Activated T-helper 2 cell treated with anti-CD3 and anti-CD28 coated beads, Interferon-gamma antibody, Interleukin-2, Interleukin-4, amounts not matched to agents 10 μg/mL and 5 μg/mL and 100 μg/mL, durations not matched to agents 14 hours and 24 hours and 36 hours (primary cell): ENCODE measurements at regions of chr7 and their contacts with region 1.

Region 1: DNA sequence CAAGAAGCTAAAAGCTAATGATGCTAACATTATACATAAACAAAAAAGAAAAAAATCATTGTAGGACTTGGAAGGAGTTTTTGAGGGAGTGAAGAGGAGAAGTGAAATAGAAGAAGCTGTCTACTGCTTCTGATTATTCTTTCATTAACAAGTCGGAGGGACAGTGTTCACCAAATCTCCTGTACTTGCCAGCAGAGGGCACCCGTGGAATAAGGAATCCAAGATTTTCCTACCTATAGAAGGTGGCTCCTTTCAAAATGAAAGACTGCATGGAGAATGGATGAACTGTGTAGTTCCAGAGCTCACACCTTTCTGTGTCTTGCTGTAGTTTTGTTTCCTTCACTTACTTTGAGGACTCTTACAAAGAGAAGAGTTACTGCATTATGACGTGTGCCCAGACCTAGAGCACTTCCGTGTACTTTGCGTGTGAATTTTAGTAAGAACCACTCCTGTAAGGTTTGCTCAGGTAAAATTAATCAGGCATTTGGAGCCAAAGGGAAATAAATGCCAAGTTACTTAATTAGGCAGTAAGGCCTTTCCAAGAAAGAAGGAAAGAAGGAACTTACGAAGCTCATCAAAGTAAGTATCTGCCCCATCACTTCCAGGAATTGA is 145.1 kb downstream of the SEMA3D start:
- DNase-seq: no peak
- H3K4me3 Mint-ChIP-seq: no peak overlapping the region
- H3K27ac Mint-ChIP-seq: no peak overlapping the region
- H3K4me1 Mint-ChIP-seq: no peaks in the 10 kb centered on the region
- H3K27me3 Mint-ChIP-seq: no peaks in the 10 kb centered on the region

Region 2: DNA sequence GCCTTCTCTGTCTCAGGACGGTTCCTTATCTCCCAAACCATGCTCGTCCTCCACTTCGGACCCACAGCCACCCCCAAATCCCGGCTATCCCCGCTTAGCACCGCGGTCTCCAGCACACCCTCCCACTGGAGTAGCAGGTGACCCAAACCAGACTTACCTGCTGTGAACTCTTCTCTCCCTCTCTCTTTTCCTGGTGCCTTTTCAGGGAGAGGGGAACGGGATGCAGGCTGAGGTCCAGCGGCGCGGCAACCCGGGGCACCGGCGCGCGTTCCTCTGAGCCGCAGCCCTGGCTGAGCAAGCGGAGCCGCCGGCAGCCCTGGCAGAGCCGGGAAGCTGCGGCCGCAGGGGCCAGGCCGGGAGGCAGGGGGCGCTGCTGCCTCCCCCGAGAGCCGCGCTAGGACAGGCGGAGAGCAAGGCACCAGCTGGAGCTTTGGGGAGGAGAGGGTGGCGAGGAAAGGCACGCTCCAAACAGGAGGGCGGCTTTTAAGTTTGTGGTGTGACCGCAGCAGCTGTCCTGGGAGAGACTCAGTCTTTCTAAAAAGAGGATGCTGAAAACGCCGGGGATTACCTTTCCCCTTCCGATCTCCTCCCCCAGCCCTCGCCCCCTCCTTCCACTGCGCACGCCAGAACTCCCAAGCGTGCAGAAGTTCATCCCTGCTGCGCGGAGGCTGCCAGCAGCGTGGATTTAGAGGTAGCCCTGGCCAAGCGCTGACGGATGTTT is 145.0 kb after region 1 on chr7 and contains the start of gene SEMA3D:
- intact Hi-C with region 1: loop called (anchors 10 kb)
- DNase-seq: no peak
- H3K4me3 Mint-ChIP-seq: peak within 1 kb of the TSS; percentile 26
- H3K27ac Mint-ChIP-seq: no peak within 1 kb of the TSS
- H3K4me1 Mint-ChIP-seq: peaks cover 7% of the 10 kb centered on the region
- H3K27me3 Mint-ChIP-seq: peaks cover 38% of the 10 kb centered on the region
- total RNA-seq, gene SEMA3D: 0.09 and 0.11 TPM in 2 replicates

Region 3: GRCh38 chr7:85464042-85464651 is 422.4 kb after region 1 on chr7:
- intact Hi-C with region 1: loop called (anchors 10 kb)
- DNase-seq: no peak
- H3K4me3 Mint-ChIP-seq: no peak overlapping the region
- H3K27ac Mint-ChIP-seq: no peak overlapping the region
- H3K4me1 Mint-ChIP-seq: no peaks in the 10 kb centered on the region
- H3K27me3 Mint-ChIP-seq: no peaks in the 10 kb centered on the region

Region 4: GRCh38 chr7:85554236-85555178 is 512.8 kb after region 1 on chr7:
- intact Hi-C with region 1: loop called (anchors 1 kb)
- DNase-seq: no peak
- H3K4me3 Mint-ChIP-seq: no peak overlapping the region
- H3K27ac Mint-ChIP-seq: no peak overlapping the region
- H3K4me1 Mint-ChIP-seq: no peaks in the 10 kb centered on the region
- H3K27me3 Mint-ChIP-seq: no peaks in the 10 kb centered on the region